ENCODE measurements at regions of chr14 and their contacts with region 1.

Region 1: DNA sequence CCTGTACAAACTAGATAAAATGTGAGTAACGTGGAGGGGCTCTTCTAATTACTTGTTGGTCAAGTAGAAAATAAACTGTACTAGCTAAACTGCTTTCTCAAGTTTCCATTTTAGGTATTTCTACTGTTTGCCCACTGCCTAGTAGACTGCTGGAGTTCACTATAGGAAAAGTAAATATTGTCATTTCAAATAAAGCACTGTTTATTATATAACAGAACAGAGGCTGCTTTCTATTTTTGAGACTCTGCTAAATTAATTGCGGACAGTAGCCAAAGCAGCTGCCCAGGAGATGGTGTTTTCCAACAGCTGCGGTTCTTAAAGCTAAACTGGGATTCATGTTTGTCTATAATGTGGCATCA is 15.9 kb upstream of the SIX1 start:
- H3K4me3 Mint-ChIP-seq: no peak overlapping the region
- H3K27ac Mint-ChIP-seq: no peak overlapping the region
- H3K4me1 Mint-ChIP-seq: peaks cover 5% of the 10 kb centered on the region
- H3K27me3 Mint-ChIP-seq: peaks cover 50% of the 10 kb centered on the region

Region 2: GRCh38 chr14:60724137-60724619 is 59.0 kb after region 1 on chr14 and contains the start of gene SIX4:
- intact Hi-C with region 1: loop called (anchors 10 kb)
- H3K4me3 Mint-ChIP-seq: peak within 1 kb of the TSS; percentile 81
- H3K27ac Mint-ChIP-seq: no peak within 1 kb of the TSS
- H3K4me1 Mint-ChIP-seq: peaks cover 26% of the 10 kb centered on the region
- H3K27me3 Mint-ChIP-seq: peaks cover 91% of the 10 kb centered on the region